ENCODE measurements at regions of chr14 and their contacts with region 1.

Region 1: DNA sequence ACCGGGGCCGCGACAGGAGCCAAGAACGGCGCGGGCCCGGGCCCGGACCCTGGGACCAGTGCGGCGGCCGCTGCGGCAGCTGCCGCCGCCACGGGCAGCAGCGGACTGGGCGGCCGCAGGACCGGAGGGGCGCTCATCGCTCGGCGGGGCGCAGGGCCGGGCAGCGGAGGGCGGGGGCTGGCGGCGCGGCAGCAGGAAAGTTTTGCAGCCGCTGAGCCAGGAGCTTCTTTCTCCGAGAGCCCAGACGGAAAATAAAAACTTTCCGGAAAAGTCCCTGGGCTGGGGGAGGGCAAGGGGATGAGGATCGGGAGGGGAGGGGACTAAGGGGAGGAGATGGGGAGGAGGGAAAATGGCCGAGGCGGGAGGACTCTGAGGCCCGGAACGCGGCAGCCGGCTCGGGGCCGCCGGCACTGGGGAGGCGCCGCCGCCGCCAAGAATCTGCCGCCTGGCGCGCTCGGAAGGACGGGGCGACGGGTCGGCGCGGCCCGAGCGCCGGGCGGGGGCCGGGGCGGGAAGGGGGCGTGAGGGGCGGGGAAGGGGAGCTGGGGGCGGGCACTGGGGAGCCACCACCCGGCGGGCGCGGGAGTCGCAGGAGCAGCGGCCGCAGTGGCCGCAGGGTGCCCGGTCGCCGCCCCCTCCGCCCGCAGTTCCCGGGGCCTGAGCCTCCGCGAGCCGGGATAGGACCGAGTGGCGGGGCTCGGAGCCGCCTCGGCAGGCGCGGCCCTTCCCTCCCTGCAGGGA is at the start of gene PRKD1:
- DNase-seq: peak; percentile 41 to 94 (median 50)

Region 2: GRCh38 chr14:29521526-29522137 is 405.9 kb before region 1 on chr14:
- intact Hi-C with region 1: no loop called
- DNase-seq: no peak

Region 3: DNA sequence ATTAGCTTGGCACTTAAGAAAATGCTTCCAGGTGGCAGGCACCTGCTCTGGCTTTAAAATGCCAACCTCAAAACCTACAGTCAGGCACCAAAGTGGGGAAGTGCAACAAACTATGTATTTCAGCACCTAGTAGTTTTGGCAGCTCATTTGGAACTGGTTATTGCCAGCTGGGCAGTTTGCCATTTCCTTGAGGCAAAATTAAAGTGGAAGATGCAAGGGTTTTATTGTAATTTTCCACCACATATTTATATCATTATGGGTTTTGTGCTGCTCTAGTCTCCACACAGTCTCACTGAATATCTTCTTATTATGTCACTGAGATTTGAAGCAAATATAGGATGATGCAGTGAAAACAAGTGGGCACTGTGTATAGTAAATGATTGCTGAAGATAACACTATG is 116.9 kb before region 1 on chr14:
- intact Hi-C with region 1: loop called (anchors 10 kb)
- DNase-seq: peak in 2 of 10 donors; percentile 24 to 33